CD4-positive, alpha-beta T cell (primary cell): ENCODE measurements at regions of chr10 and their contacts with region 1.

Region 1: DNA sequence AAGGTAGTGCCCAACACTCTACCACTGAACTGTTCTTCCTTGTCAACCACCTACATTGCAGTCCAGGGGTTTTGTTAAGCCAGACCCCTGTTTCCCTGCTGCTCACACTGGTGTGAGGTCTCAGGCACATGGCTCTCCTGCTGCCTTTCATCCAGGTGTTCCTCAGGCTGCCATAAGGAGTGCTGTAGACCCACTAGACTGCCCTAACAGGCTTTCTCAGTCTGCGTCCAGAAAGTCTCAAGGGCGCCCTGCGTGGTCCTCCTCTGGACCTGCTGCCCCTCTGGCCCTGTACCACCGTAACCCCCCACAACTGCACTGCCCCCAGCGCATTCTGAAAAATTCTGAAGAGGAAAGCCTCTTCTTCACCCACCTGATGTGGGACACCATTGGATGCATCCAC is 225.7 kb upstream of the ANKRD30A start:
- DNase-seq: no peak
- ATAC-seq: no peak
- H3K4me3 ChIP-seq: no peak overlapping the region
- H3K4me3 Mint-ChIP-seq: no peak overlapping the region
- H3K27ac ChIP-seq: no peak overlapping the region
- H3K27ac Mint-ChIP-seq: no peak overlapping the region
- H3K4me1 ChIP-seq: no peaks in the 10 kb centered on the region
- H3K4me1 Mint-ChIP-seq: no peaks in the 10 kb centered on the region
- H3K27me3 ChIP-seq: no peaks in the 10 kb centered on the region
- H3K27me3 Mint-ChIP-seq: no peaks in the 10 kb centered on the region
- CTCF ChIP-seq: no peak

Region 2: DNA sequence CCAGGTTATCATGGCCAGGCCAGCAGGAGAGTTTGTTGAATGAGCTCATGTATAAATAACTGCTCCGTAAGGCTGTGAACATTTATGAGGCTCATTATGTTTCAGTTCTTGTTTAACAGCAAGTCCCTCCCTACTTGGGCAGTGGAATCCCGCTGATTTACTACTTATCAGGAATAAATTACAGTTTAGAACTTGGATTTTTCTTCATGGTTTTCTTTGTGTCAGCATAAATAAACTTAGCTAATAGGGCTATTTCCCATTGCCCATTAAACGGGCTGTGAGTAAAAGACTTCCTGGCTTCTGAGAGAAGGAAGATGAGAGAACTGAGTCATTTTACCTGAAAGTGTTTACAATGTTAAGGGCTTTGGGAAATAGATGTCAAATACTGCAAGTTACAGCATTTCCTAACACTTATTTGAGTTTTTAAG is 475.8 kb before region 1 on chr10:
- CTCF ChIA-PET with region 1: no interaction called
- POLR2A ChIA-PET with region 1: no interaction called
- intact Hi-C with region 1: no loop called
- DNase-seq: no peak
- ATAC-seq: no peak
- H3K4me3 ChIP-seq: no peak overlapping the region
- H3K4me3 Mint-ChIP-seq: no peak overlapping the region
- H3K27ac ChIP-seq: no peak overlapping the region
- H3K27ac Mint-ChIP-seq: no peak overlapping the region
- H3K4me1 ChIP-seq: no peaks in the 10 kb centered on the region
- H3K4me1 Mint-ChIP-seq: no peaks in the 10 kb centered on the region
- H3K27me3 ChIP-seq: no peaks in the 10 kb centered on the region
- H3K27me3 Mint-ChIP-seq: no peaks in the 10 kb centered on the region
- CTCF ChIP-seq: no peak

Region 3: DNA sequence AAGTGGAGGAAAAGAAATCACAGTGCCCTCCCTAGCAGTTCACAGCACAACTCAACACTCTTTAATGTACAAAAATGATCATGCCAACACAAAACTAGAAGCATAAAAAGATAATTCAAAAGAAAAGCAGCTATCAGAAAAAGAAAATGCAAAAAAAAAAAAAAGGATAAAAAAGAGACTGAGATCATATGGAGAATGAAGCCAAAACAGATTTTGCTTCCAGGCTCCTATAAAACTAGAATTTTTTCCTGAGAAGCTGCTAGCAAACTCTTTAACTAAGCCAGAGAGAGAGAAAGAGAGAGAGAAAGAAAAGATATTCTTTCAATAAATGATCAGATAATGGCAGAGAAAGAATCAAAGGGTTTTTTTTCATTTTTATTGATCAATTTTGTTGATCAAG is 62.2 kb before region 1 on chr10:
- CTCF ChIA-PET with region 1: no interaction called
- POLR2A ChIA-PET with region 1: no interaction called
- intact Hi-C with region 1: loop called in 1 of 2 experiments (anchors 10 kb)
- DNase-seq: no peak
- ATAC-seq: no peak
- H3K4me3 ChIP-seq: no peak overlapping the region
- H3K4me3 Mint-ChIP-seq: no peak overlapping the region
- H3K27ac ChIP-seq: no peak overlapping the region
- H3K27ac Mint-ChIP-seq: no peak overlapping the region
- H3K4me1 ChIP-seq: no peaks in the 10 kb centered on the region
- H3K4me1 Mint-ChIP-seq: no peaks in the 10 kb centered on the region
- H3K27me3 ChIP-seq: no peaks in the 10 kb centered on the region
- H3K27me3 Mint-ChIP-seq: no peaks in the 10 kb centered on the region
- CTCF ChIP-seq: no peak